Breast epithelium (tissue), 4 donors: ENCODE measurements at regions of chr3 and their contacts with region 1.

Region 1: DNA sequence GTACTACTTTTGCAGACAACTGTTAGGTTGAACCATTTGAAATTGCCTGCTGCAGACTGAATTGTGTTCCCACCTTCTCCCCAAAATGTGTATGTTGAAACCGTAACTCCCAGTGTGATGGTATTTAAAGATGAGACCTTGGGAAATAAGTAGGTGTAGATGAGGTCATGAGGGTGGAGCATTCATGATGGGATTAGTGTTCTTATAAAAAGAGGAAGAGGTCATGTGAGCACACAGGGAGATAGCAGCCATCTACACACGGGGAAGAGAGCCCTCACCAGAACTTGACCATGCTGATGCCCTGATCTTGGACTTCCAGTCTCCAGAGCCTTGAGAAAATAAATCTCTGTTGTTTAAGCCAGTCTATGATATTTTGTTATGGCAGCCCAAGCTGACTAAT is 17.4 kb upstream of the FHIT start:
- DNase-seq: no peak
- H3K4me3 ChIP-seq: no peak overlapping the region
- H3K27ac ChIP-seq: no peak overlapping the region
- H3K4me1 ChIP-seq: no peaks in the 10 kb centered on the region
- H3K27me3 ChIP-seq: no peaks in the 10 kb centered on the region
- CTCF ChIP-seq: no peak
- POLR2A ChIP-seq: no peak

Region 2: DNA sequence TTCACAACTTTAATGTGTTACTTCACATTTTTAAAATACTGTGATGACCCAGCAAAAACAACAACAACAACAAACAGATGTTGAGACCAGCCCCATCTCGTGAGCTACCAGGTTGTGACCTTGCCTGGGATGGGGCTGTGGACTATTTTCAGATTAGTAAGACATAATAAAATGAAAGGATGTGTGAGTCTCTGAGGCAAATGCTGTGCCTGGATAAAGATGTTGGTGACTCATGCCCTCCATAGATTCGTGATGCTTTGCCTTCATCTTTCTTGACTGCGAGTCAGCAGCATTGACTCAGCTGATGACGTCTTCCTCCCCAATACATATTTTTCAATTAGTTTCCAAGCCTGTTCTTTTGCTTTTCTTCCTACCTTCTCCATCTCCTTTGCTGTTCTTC is 1765.8 kb before region 1 on chr3:
- intact Hi-C with region 1: loop called (anchors 10 kb)
- DNase-seq: no peak
- H3K4me3 ChIP-seq: no peak overlapping the region
- H3K27ac ChIP-seq: no peak overlapping the region
- H3K4me1 ChIP-seq: no peaks in the 10 kb centered on the region
- H3K27me3 ChIP-seq: no peaks in the 10 kb centered on the region
- CTCF ChIP-seq: no peak
- POLR2A ChIP-seq: no peak